Activated CD8-positive, alpha-beta T cell treated with anti-CD3 and anti-CD28 coated beads for 36 hours (primary cell): ENCODE measurements at regions of chr19 and their contacts with region 1.

Region 1: GRCh38 chr19:10106100-10106936 is at the start of gene PPAN:
- DNase-seq: peak; percentile 99
- ATAC-seq: peak; percentile 58
- H3K4me3 Mint-ChIP-seq: peak within 1 kb of the TSS; percentile 97
- H3K27ac Mint-ChIP-seq: peak within 1 kb of the TSS; percentile 100
- H3K4me1 Mint-ChIP-seq: peaks cover 58% of the 10 kb centered on the region
- H3K27me3 Mint-ChIP-seq: no peaks in the 10 kb centered on the region
- CTCF ChIP-seq: no peak
- total RNA-seq, gene PPAN: 165 to 171 TPM

Region 2: DNA sequence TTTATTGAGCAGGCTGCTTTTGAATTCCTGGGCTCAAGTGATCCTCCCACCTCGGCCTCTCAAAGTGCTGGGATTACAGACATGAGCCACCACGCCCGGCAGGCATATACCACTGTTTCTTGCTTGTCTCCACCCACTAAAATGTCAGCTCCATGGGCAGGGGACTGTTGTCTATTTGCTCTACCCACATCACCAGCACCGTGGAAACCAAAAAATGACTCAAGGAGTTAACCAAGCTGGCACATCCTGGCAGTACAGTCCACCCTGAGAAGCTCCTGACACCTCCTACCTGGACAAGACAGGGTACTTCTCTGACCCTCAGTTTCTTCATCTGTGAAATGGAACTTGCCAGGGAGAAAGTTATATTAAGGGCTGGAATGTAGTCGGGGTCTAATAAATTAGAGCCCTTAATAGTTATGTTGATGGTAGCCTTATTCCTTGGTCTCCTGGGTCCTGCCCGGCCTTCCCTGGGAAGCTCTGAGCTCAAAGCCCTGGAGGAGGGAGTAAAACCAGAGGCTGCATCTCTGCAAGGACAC is 79.1 kb before region 1 on chr19:
- CTCF ChIA-PET with region 1: no interaction called
- POLR2A ChIA-PET with region 1: no interaction called
- intact Hi-C with region 1: no loop called
- DNase-seq: no peak
- ATAC-seq: no peak
- H3K4me3 Mint-ChIP-seq: no peak overlapping the region
- H3K27ac Mint-ChIP-seq: no peak overlapping the region
- H3K4me1 Mint-ChIP-seq: peaks cover 4% of the 10 kb centered on the region
- H3K27me3 Mint-ChIP-seq: peaks cover 11% of the 10 kb centered on the region
- CTCF ChIP-seq: no peak

Region 3: DNA sequence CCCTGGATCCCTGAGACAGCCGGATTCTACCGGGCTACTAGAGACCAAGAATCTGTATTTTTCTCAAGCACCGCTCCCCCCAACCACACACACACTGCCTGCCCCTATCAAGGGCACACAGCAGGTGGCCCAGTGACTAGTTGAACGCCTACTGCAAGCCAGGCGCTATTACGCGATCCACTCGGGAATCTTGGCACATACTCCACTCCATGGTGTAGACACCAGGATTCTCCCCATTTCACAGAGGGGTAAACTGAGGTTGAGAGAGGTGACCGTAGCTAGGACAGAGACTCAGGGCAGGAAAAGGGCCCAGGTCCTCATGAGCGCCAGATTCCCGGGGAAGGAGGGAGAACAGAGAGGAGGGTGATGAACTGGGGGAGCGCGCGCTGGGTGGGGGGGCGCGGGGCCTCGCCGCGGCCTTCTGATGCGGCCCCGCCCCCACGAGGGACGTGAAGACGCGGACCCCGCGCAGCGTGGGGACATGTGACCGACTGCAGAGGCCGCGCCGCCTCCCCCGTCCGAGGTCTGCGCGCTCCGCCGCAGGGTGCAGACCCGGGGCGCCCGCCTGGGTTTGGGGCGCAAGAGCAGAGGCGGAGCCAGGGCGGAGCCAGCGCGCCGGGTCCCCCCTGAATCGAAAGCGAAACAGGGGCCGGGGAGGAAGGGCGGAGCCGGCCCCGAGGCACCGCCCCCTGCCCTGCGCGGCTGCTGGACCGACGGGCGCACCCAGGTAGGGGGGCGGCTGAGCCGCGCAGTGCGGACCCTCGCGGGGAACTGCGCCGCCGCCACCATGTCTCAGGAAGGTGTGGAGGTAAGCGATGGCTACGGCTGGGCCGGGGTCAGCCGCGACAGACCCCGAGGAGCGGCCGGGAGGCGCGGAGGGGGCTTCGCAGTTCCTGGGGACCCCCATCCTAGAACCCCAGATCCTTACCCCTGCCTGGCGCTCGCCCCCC is 20.4 kb before region 1 on chr19 and contains the start of gene SHFL:
- CTCF ChIA-PET with region 1: no interaction called
- POLR2A ChIA-PET with region 1: interaction called, 521 read pairs
- intact Hi-C with region 1: no loop called
- DNase-seq: peak; percentile 85
- ATAC-seq: peak; percentile 93
- H3K4me3 Mint-ChIP-seq: peak within 1 kb of the TSS; percentile 80
- H3K27ac Mint-ChIP-seq: peak within 1 kb of the TSS; percentile 85
- H3K4me1 Mint-ChIP-seq: peaks cover 13% of the 10 kb centered on the region
- H3K27me3 Mint-ChIP-seq: no peaks in the 10 kb centered on the region
- CTCF ChIP-seq: no peak
- total RNA-seq, gene SHFL: 45.6 to 49.5 TPM

Region 4: GRCh38 chr19:10095948-10096621 is 10.2 kb before region 1 on chr19:
- CTCF ChIA-PET with region 1: interaction called, 128 read pairs
- POLR2A ChIA-PET with region 1: interaction called, 521 read pairs
- intact Hi-C with region 1: no loop called
- DNase-seq: peak; percentile 88
- ATAC-seq: peak; percentile 95
- H3K4me3 Mint-ChIP-seq: peak overlapping the region; percentile 60
- H3K27ac Mint-ChIP-seq: peak overlapping the region; percentile 81
- H3K4me1 Mint-ChIP-seq: peaks cover 20% of the 10 kb centered on the region
- H3K27me3 Mint-ChIP-seq: no peaks in the 10 kb centered on the region
- CTCF ChIP-seq: no peak

Region 5: GRCh38 chr19:10120538-10121189 is 14.3 kb after region 1 on chr19:
- CTCF ChIA-PET with region 1: interaction called, 128 read pairs
- POLR2A ChIA-PET with region 1: interaction called, 521 read pairs
- intact Hi-C with region 1: no loop called
- DNase-seq: no peak
- ATAC-seq: no peak
- H3K4me3 Mint-ChIP-seq: no peak overlapping the region
- H3K27ac Mint-ChIP-seq: no peak overlapping the region
- H3K4me1 Mint-ChIP-seq: peaks cover 14% of the 10 kb centered on the region
- H3K27me3 Mint-ChIP-seq: no peaks in the 10 kb centered on the region
- CTCF ChIP-seq: no peak

Region 6: GRCh38 chr19:10135551-10136334 is 29.4 kb after region 1 on chr19:
- CTCF ChIA-PET with region 1: no interaction called
- POLR2A ChIA-PET with region 1: no interaction called
- intact Hi-C with region 1: no loop called
- DNase-seq: no peak
- ATAC-seq: no peak
- H3K4me3 Mint-ChIP-seq: no peak overlapping the region
- H3K27ac Mint-ChIP-seq: no peak overlapping the region
- H3K4me1 Mint-ChIP-seq: no peaks in the 10 kb centered on the region
- H3K27me3 Mint-ChIP-seq: no peaks in the 10 kb centered on the region
- CTCF ChIP-seq: no peak

Region 7: DNA sequence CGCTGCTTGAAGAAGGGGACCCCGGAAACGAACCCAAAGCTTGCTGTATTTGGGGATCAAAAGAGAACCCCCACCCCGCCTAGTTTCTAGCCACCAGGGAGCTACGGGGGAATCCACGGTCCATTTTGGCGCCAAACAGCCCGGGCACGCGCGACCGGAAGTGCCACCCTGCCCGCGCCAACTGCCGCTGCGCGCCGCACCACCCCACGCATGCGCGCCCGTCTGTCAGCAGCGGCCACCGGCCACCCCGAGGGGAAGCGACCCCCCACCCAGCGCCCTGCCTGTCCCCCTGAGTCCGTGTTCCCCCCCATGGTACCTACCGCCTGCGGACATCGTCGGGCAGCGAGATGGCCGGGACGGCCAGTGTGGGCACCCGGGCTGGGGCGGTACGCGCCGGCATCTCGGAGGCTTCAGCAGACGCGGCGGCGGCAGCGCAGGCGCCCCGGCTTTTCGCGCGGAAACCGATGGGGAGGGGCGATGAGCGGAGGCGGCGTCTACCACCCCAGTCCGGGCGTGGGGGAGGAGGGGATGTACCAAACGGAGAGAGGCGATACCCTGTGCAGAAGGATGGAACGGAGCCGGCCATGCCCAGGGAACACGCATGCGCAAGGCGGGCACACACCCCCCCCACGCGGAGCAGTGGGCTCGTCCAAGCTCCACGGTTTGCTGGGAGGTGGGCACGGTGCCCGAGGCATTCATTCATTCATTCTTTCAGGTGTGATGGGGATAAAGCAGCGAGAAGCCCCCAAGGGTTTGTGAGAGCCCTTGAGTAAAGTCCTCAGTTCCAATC is 88.4 kb after region 1 on chr19 and contains the start of gene DNMT1:
- CTCF ChIA-PET with region 1: no interaction called
- POLR2A ChIA-PET with region 1: interaction called, 23 read pairs
- intact Hi-C with region 1: no loop called
- DNase-seq: peak; percentile 99
- ATAC-seq: peak; percentile 96
- H3K4me3 Mint-ChIP-seq: peak within 1 kb of the TSS; percentile 94
- H3K27ac Mint-ChIP-seq: peak within 1 kb of the TSS; percentile 97
- H3K4me1 Mint-ChIP-seq: peaks cover 42% of the 10 kb centered on the region
- H3K27me3 Mint-ChIP-seq: no peaks in the 10 kb centered on the region
- CTCF ChIP-seq: no peak
- total RNA-seq, gene DNMT1: 372 to 379 TPM